ENCODE measurements at regions of chr2 and their contacts with region 1.

Region 1: DNA sequence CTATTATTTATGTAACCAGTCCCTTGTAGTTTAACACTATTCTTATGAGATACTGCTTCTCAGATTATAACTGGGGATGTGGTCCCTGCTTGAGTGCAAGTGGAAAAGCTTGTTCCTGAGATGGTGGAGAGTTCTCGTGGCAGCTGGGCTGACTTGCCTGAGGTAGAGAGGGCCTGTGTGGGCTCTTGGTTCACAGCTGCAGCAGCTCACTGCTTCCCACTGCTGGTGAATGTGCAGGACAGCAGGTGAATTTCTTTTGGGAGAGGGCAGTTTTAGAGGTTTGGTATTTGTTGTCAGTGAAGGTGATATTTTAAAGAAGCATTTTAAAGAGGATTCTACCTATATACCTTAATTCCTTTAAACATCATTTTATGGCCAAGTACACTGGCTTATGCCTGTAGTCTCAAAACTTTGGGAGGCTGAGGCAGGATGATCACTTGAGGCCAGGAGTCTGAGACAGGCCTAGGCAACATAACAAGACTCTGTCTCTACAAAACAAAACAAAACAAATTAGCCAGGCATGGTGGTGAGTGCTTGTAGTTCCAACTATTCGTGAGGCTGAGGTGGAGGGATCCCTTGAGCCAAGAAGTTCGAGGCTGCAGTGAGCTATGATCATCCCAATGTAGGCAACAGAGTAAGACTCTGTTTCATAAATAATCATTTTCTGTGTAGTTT is 94.8 kb downstream of the MTA3 start:
- DNase-seq: peak; percentile 36 to 40
- ATAC-seq: peak; percentile 72 to 92 (median 85)
- H3K4me3 ChIP-seq: no peak overlapping the region
- H3K27ac ChIP-seq: peak overlapping the region in 1 of 10 donors; percentile 26
- H3K4me1 ChIP-seq: peaks cover 0 to 16% (median 5%) of the 10 kb centered on the region in 9 donors
- H3K27me3 ChIP-seq: no peaks in the 10 kb centered on the region
- CTCF ChIP-seq: peak; percentile 90 to 98 (median 94)

Region 2: GRCh38 chr2:42494355-42495233 is 168.6 kb before region 1 on chr2:
- intact Hi-C with region 1: loop called in 8 of 10 experiments (anchors 1 to 5 kb)
- DNase-seq: peak; percentile 56 to 57
- ATAC-seq: peak; percentile 36 to 81 (median 71)
- H3K4me3 ChIP-seq: peak overlapping the region; percentile 34 to 64 (median 60)
- H3K27ac ChIP-seq: no peak overlapping the region
- H3K4me1 ChIP-seq: peaks cover 0 to 20% (median 10%) of the 10 kb centered on the region in 9 donors
- H3K27me3 ChIP-seq: peaks cover 13 to 81% (median 54%) of the 10 kb centered on the region in 7 donors
- CTCF ChIP-seq: peak; percentile 72 to 88 (median 87)

Region 3: DNA sequence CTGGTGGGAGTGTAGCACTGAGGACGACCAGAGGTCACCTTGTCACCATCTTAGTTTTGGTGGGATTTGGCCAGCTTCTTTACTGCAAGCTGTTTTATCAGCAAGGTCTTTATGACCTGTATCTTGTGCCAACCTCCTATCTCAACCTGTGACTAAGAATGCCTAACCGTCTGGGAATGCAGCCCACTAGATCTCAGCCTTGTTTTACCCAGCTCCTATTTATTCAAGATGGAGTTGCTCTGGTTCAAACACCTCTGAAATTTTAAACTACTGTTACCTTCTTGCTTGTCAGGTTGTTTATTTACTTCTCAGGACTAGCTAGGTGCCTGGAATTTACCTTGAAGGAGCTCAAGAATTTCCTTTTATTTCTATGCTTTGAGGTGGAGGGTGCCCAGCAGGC is 160.0 kb before region 1 on chr2:
- intact Hi-C with region 1: loop called in 4 of 10 experiments (anchors 5 kb)
- DNase-seq: no peak
- ATAC-seq: no peak
- H3K4me3 ChIP-seq: no peak overlapping the region
- H3K27ac ChIP-seq: no peak overlapping the region
- H3K4me1 ChIP-seq: no peaks in the 10 kb centered on the region
- H3K27me3 ChIP-seq: peaks cover 0 to 13% (median 0%) of the 10 kb centered on the region in 7 donors
- CTCF ChIP-seq: no peak

Region 4: DNA sequence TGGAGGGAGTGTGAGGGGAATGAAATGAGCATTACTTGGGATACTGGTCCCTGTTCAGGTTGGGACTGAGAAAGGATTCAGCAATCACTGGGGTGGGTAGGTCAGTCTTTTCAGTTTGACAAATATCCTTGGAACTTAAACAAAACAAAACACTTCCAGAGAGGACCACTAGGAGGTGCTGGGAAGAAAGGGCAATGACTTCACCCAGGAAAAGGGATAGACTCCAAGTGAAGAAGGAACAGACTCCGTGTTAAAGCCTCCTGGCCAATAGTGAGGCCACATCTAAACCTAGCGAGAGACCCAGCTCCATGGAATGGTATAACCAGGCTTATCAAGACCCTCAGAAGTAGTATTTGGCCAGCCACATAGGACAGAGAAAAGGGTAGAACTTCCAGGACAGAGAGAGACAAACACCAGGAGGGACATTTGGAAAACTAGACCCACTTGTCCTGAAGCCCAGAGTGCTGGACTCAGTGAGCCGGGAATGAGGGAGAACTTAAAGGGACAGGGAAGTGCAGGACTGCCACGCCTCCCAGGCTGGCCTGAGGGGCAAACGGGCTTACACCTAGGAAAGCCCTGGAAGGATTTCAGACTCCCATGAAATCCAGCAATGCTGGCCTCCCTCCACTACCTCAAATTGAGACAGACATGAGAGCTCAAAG is 149.9 kb before region 1 on chr2:
- intact Hi-C with region 1: loop called in 8 of 10 experiments (anchors 5 kb)
- DNase-seq: peak in 1 of 2 donors; percentile 9
- ATAC-seq: no peak
- H3K4me3 ChIP-seq: no peak overlapping the region
- H3K27ac ChIP-seq: no peak overlapping the region
- H3K4me1 ChIP-seq: peaks cover 0 to 6% (median 0%) of the 10 kb centered on the region in 9 donors
- H3K27me3 ChIP-seq: peaks cover 0 to 4% (median 0%) of the 10 kb centered on the region in 7 donors
- CTCF ChIP-seq: peak; percentile 28 to 63 (median 54)

Region 5: GRCh38 chr2:42639340-42640077 is 23.7 kb before region 1 on chr2:
- intact Hi-C with region 1: no loop called
- DNase-seq: no peak
- ATAC-seq: no peak
- H3K4me3 ChIP-seq: no peak overlapping the region
- H3K27ac ChIP-seq: no peak overlapping the region
- H3K4me1 ChIP-seq: peaks cover 0 to 13% (median 5%) of the 10 kb centered on the region in 9 donors
- H3K27me3 ChIP-seq: no peaks in the 10 kb centered on the region
- CTCF ChIP-seq: no peak

Region 6: DNA sequence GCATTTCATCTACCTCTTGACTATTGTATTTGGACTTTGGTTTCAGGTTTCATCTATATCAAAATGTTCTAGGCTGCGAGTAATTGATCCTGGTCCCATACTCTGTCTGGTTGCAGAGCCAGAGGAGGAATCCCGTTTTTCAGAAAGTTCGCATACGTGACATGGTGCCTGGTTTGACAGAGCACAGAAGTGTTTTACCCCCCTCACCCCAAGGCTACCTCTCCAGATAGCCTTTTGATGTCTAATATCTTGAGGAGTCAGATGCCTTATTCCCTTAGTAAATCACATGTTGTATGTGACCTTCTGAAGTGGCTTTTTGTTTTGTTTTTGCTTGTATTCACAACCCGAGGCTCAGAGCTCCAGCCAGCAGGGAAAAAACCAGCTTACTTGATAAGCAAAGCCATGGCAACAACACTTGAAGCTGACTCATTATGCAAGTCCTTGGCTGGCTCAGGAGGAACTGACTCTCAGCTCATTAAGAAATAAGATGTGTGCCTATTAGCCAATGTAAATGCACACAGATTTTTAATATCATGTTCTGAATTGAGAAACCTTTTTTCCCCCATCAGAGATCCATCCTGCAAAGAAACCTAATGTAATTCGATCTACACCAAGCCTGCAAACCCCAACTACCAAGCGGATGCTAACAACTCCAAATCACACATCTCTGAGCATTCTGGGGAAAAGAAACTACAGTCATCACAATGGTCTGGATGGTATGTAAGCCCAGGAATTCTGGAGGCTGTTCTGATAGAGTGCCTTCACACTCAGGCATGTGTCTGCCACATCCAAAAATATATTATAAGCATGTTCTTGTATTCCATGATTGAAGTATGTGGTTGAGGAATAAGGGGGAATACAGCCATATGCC is 59.3 kb after region 1 on chr2:
- intact Hi-C with region 1: no loop called
- DNase-seq: peak in 1 of 2 donors; percentile 15
- ATAC-seq: peak in 6 of 8 donors; percentile 70 to 96 (median 80)
- H3K4me3 ChIP-seq: peak overlapping the region in 2 of 10 donors; percentile 2 to 16
- H3K27ac ChIP-seq: peak overlapping the region in 1 of 10 donors; percentile 1
- H3K4me1 ChIP-seq: peaks cover 0 to 24% (median 10%) of the 10 kb centered on the region in 9 donors
- H3K27me3 ChIP-seq: no peaks in the 10 kb centered on the region
- CTCF ChIP-seq: no peak

Measured in heart right ventricle (tissue), 16 donors.